Aorta (tissue), 5 donors: ENCODE measurements at regions of chr5 and their contacts with region 1.

Region 1: GRCh38 chr5:151900891-151901290 is 23.8 kb downstream of the GLRA1 start:
- DNase-seq: no peak
- ATAC-seq: no peak
- H3K4me3 ChIP-seq: no peak overlapping the region
- H3K27ac ChIP-seq: no peak overlapping the region
- H3K4me1 ChIP-seq: peaks cover 2 to 27% of the 10 kb centered on the region in 2 donors
- H3K27me3 ChIP-seq: no peaks in the 10 kb centered on the region

Region 2: GRCh38 chr5:151921916-151922315 is 21.0 kb after region 1 on chr5:
- intact Hi-C with region 1: loop called in 1 of 2 experiments (anchors 1 kb)
- DNase-seq: no peak
- ATAC-seq: no peak
- H3K4me3 ChIP-seq: no peak overlapping the region
- H3K27ac ChIP-seq: no peak overlapping the region
- H3K4me1 ChIP-seq: no peaks in the 10 kb centered on the region
- H3K27me3 ChIP-seq: peaks cover 0 to 2% of the 10 kb centered on the region in 2 donors